ENCODE measurements at regions of chr4 and their contacts with region 1.

Region 1: DNA sequence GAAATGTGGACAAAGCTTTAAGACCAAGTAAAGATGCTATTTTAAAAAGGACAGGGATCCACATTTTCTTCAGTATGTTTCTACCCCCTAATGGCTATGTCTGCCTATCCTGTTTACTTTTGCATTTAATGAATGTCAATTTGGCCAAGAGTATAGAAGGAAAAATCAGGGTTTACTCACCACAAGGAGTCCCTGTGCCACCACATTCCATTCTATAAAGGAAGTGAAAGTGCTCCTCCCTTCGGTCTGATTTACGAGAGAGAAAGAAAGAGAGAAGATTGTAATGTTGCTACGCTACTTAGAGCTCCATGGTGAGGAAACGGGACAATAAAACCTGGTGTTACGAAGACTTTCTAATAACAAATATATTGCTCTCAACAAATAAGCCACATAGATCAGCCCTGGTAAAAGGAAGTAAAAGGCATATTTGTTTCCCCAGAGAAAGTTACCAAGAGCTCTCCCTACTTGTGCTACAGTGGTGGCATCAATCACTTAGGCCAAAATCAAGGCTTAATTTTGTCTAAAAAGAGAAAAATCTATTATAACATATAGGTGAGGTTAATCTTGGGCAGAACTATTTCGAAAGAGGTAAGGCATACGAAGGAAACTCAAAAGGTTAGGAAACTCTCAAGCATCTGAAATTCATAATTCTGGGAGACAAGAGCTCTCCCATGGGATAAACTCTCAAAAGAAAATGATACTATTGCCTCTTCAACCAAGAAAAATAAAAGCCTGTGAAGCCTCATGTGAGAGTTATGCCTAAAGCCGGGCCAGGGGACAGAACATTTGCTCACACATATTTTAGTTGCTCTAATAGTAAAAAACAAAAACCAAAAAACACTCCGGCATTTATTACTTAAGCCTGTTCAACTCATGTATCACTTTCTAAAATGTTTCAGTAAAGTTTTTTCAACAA is 29.5 kb downstream of the TAPT1 start:
- DNase-seq: no peak

Region 2: GRCh38 chr4:16026160-16026761 is 170.5 kb before region 1 on chr4:
- intact Hi-C with region 1: loop called (anchors 1 kb)
- DNase-seq: no peak

Region 3: DNA sequence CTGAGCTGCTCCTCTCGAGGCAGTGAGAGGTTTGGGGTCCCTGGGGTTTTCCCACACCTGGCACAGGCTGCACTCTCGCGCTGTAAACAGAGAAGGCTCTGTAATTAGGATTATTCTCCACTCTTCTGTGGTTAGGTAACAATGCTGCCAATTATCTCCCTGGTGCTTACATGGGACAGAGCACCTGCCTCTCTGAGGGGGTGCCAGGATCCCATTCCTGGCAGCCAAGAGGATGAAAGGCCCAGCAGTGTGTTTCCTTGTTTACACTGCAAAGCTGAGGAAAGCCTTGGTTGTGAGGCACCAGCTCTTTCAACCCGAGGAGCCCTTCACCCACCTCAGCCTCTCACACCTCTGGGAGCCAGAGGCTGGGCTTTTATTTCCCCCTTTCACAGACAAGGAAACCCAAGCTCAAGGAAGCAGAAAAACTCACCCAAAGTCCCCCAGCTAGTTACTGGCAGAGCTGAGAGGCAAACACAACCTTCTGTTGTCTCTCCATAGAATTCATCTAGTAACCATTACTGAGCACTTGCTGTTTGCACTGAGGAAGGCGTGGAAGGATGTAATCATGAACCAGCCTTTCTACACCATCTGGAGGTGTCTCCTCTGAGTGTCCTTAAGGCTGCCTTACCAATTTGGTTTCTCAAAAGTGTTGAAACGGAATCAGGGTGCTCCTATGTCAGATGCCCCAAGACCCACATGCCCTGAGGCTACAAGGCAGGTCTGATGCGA is 73.2 kb before region 1 on chr4:
- intact Hi-C with region 1: no loop called
- DNase-seq: no peak

Region 4: GRCh38 chr4:16225863-16226815 is 29.4 kb after region 1 on chr4 and contains the start of gene TAPT1:
- intact Hi-C with region 1: loop called (anchors 2 kb)
- DNase-seq: peak; percentile 93
- total RNA-seq, gene TAPT1: 44.8 TPM

Region 5: DNA sequence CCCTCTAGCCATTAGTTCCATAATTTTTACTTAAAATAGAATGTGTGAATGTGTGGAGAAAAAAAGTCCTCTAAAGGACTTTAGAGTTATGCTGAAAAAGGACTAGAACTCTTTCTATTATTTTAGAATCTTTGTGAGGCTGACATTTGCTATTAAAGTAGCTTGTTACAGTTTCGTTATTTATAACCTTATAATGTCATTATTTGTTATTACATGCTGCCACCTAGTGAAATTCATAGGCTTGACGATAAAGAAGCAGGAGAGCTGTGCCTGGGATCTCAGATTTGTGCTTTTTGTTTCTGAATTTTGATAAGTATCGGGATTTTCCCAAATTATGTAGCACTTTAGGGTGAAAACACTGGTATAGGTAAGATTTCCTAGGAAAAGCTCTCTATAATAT is 68.1 kb after region 1 on chr4:
- intact Hi-C with region 1: loop called (anchors 5 kb)
- DNase-seq: no peak